ENCODE measurements at regions of chr20 and their contacts with region 1.

Region 1: DNA sequence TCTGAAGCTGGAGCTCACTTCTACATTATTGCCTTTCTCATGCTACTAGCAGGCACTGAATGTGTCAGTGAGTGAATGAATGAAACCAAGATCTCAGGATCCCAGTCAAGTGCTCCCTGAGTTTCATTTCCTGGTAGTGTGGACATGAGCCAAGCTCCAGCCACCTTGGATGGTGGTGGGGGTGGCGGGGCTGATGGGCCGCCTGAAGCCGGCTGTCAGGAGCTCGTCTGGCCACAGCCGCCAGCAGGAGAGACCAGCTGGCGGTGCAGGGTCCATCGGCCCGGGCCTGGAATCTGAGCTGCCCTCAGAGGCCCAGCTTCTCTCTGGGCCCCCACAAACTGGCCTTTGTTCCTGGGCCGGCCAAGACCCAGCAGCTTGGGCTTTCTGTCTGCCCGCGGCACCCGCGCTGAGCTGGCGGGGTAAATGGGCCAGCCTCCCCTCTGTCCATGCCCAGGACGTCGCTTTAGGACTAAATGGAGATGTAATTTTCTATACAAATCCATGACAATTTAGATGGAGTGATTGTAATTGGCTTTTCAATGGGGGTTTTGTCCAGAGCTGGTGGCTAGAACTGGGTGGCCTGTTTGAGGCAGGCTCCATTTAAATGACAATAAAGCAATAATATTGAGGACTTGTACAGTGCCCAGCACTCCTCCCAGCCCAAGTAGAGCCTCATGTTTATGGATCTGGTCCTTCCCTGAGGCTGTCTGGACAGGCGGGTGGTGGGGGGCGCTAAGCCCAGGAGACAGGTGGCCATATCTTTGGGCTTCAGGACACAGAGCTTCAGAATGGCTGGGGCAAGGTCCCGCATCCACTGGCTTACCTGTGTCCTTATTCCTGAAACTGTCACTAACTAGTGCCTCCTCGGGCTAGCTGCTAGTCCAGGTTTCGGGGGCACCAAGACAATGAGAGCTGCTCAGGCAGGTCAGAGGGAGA is 43.5 kb downstream of the NOL4L start:
- DNase-seq: peak; percentile 91
- ATAC-seq: peak; percentile 77
- H3K4me3 ChIP-seq: peak overlapping the region in 2 of 3 experiments; percentile 7 to 54; a peak in 4 of 6 replicates
- H3K27ac ChIP-seq: peak overlapping the region; percentile 90
- H3K4me1 ChIP-seq: peaks cover 98% of the 10 kb centered on the region
- H3K27me3 ChIP-seq: no peaks in the 10 kb centered on the region
- CTCF ChIP-seq: peak; percentile 59
- EP300 ChIP-seq: peak; percentile 84 to 91; a peak in 3 of 4 replicates
- POLR2A ChIP-seq: peak in 1 of 2 experiments; percentile 72; a peak in 1 of 4 replicates
- RAD21 ChIP-seq: peak; percentile 93

Region 2: DNA sequence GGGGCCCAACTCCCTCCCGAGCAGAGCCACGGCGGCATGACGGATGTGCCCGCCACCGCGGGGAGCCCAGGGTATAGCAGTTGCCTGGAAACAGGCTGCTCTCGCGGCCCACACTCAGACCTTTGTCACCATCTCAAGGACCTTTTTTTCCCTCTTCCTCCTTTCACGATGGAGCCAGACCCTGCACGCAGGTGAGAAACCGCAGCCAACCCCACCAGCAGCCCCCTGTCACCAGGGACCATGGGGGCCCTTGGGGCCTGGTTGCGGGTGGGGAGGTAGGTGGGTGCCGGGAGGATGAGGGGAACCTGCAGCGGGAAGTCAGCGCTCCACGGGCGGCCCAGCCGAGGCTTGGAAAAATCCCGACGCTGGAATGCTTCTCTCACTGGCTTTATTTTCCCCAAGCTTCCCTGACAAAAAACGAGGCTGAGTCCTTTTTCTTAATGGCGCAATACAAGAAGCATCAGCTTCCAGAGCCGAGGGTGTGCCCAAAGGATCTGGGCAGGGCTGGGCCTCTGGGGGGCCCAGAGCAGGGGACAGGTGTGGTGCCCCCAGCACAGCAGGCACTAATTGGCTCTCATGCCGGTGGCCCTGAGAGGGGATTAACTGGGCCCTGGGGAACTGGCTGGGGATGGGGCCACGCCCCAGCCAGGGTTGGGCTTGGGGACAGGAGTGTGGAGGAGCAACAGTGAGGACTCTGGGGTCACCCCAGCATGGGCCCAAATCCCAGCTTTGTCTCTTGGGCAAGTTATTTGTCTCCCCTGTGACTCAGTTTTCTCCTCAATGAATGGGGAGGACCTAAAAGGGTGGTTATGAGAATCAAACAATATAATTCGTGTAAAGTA is 19.6 kb after region 1 on chr20:
- CTCF ChIA-PET with region 1: interaction called, 4 read pairs
- POLR2A ChIA-PET with region 1: interaction called, 124 read pairs
- in situ Hi-C with region 1: no loop called
- intact Hi-C with region 1: loop called (anchors 2 kb)
- DNase-seq: no peak
- ATAC-seq: peak; percentile 28
- H3K4me3 ChIP-seq: peak overlapping the region; percentile 20 to 65 (median 45); a peak in 5 of 6 replicates
- H3K27ac ChIP-seq: peak overlapping the region; percentile 68
- H3K4me1 ChIP-seq: peaks cover 94% of the 10 kb centered on the region
- H3K27me3 ChIP-seq: no peaks in the 10 kb centered on the region
- CTCF ChIP-seq: no peak
- EP300 ChIP-seq: no peak
- POLR2A ChIP-seq: no peak; a peak in 1 of 4 replicates
- RAD21 ChIP-seq: no peak

Region 3: GRCh38 chr20:32570401-32571190 is 29.0 kb after region 1 on chr20:
- CTCF ChIA-PET with region 1: no interaction called
- POLR2A ChIA-PET with region 1: interaction called, 16 read pairs
- in situ Hi-C with region 1: no loop called
- intact Hi-C with region 1: no loop called
- DNase-seq: no peak
- ATAC-seq: peak; percentile 6; the same call in 2 of the 3 replicates
- H3K4me3 ChIP-seq: no peak overlapping the region
- H3K27ac ChIP-seq: no peak overlapping the region
- H3K4me1 ChIP-seq: peaks cover 87% of the 10 kb centered on the region
- H3K27me3 ChIP-seq: no peaks in the 10 kb centered on the region; a peak in 1 of 5 replicates
- CTCF ChIP-seq: no peak
- EP300 ChIP-seq: peak in 1 of 2 experiments; percentile 50; a peak in 2 of 4 replicates
- POLR2A ChIP-seq: no peak
- RAD21 ChIP-seq: no peak

Region 4: DNA sequence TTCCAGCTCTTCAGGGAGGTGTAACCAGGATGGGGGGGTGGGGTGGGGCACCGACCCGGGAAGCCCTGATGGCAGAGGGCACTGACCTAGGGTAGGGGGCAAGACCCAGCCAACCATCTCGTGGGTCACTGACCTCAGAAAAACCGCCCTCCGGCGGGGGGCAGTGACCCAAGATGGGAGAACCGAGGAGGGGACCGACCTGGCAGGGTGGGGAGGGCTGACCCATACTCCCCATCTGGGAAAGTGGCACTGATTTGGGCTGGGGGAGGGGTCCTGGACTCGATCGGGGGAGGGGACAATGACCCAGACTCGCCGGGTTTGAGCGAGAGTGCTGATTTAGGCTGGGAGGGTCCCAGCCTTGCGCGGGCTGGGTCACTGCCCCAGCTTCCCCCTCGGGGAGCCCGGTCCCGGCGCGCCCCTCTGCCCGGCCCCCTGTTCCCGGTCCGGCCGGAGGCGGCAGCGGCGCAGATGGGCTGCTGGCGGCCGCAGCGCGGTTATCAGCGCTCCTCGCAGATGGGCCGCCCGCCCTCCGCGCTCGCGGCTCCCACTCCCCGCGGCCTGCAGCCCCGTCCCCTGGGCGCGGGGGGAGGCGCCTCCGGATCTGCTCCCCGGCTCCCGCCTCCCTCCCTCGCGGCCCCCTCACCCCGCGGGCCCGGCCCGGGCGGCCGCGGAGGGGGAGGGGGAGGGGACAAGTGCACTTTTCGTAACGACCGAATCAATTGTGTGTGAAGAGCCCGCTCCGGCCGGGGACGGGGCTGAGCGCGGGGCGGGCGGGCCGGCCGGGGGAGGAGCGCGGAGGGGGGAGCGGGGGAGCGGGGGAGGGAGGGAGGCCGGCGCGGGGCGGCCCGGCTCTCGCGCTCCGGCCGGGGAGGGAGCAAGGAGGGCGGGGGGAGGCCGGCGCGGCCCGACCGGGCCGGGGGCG is 41.3 kb after region 1 on chr20:
- CTCF ChIA-PET with region 1: no interaction called
- POLR2A ChIA-PET with region 1: interaction called, 24 read pairs
- in situ Hi-C with region 1: no loop called
- intact Hi-C with region 1: loop called (anchors 5 kb)
- DNase-seq: no peak
- ATAC-seq: peak; percentile 16
- H3K4me3 ChIP-seq: peak overlapping the region; percentile 65 to 97 (median 70)
- H3K27ac ChIP-seq: peak overlapping the region; percentile 84
- H3K4me1 ChIP-seq: peaks cover 44% of the 10 kb centered on the region
- H3K27me3 ChIP-seq: peaks cover 11 to 25% of the 10 kb centered on the region in 2 experiments; a peak in 4 of 5 replicates
- CTCF ChIP-seq: peak; percentile 2; the same call in 1 of the 2 replicates
- EP300 ChIP-seq: no peak; a peak in 1 of 4 replicates
- POLR2A ChIP-seq: peak in 1 of 2 experiments; percentile 62; a peak in 2 of 4 replicates
- RAD21 ChIP-seq: 0 out of 2 replicates have a peak, but pooled peaks have one; percentile 44

Region 5: DNA sequence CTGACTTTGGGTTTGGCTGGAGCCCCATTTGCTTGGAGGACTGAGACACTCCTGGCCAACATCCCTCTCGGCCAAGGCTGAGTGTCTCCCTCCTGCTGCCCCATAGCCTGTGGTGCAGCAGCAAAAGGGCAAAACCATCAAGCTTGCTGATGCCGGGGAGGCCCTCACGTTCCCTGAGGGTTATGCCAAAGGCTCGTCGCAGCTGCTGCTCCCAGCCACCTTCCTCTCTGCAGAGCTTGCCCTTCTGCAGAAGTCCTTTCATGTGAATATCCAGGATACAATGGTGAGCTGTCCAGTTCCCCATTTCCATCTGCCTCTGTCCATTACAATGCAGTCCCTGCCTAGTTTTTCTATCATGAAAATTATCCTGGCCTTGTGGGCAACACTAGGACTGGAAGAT is 495.9 kb after region 1 on chr20:
- CTCF ChIA-PET with region 1: no interaction called
- POLR2A ChIA-PET with region 1: no interaction called
- in situ Hi-C with region 1: no loop called
- intact Hi-C with region 1: no loop called
- DNase-seq: no peak
- ATAC-seq: no peak
- H3K4me3 ChIP-seq: no peak overlapping the region
- H3K27ac ChIP-seq: no peak overlapping the region
- H3K4me1 ChIP-seq: peaks cover 30% of the 10 kb centered on the region
- H3K27me3 ChIP-seq: peaks cover 1 to 4% of the 10 kb centered on the region in 2 experiments; a peak in 2 of 5 replicates
- CTCF ChIP-seq: no peak
- EP300 ChIP-seq: no peak
- POLR2A ChIP-seq: no peak
- RAD21 ChIP-seq: no peak

Measured in HepG2 (cell line).